Sciatic nerve (tissue), 2 donors: ENCODE measurements at regions of chr7 and their contacts with region 1.

Region 1: DNA sequence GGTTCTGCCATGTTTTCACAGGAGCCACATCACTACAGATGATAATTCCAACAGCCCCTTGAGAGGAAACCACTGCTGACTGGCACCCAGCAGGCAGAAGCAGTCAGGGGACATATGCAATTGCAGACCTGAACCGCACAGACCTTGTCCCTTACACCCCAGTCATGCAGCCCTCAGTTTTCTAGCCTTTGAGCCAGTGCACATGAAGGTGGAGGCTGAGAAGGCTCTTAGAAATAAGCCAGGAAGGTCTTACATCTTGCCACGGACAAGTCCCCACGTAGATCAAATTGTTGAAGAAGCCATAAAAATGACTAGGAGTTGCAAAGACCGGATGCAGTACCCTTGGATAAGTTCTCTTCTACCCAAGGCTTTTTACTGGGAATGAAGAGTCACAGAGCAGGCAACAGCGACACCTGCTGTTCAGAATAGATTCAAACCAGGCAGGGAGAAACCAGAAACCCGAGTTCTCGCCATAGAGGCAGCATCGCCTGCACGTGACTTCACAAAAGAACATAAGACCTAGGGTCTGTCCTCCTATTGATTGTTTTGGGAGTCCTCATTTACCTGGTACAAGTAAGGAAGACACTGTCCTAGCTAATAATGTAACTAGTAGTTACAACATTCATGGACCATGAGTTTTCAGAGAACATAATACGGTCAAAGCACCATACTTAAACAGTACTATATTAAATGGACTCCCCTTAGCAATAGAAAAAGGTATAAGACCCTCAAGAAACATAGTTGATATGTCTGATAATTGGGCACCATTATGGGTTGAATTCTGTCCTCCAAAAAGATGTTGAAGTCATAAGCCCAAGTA is 11.1 kb downstream of the STEAP1B start:
- DNase-seq: peak; percentile 82
- ATAC-seq: peak; percentile 82

Region 2: DNA sequence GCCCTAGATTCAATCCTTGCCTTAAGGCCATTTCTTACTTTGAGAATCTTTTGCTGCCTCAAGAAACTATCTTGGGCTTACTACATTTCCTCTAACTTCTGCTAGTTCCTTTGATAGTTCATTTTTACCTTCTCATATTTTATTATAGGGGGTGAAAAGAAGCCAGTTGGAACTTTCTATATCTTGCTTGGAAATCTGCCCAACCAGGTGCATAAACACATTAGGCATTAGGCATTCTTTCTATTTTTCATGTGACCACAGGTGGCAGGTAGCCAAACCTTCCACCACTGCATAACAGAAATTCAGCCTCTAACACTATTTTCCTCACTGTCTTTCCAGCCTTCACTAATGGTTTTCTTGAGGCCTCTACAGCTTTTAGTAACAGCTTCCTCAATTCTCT is 1402.2 kb before region 1 on chr7:
- intact Hi-C with region 1: no loop called
- DNase-seq: no peak
- ATAC-seq: no peak

Region 3: GRCh38 chr7:22109761-22110160 is 379.1 kb before region 1 on chr7:
- intact Hi-C with region 1: loop called (anchors 5 kb)
- DNase-seq: no peak
- ATAC-seq: peak; percentile 14

Region 4: GRCh38 chr7:22121702-22122474 is 367.0 kb before region 1 on chr7:
- intact Hi-C with region 1: no loop called
- DNase-seq: no peak
- ATAC-seq: peak; percentile 49

Region 5: DNA sequence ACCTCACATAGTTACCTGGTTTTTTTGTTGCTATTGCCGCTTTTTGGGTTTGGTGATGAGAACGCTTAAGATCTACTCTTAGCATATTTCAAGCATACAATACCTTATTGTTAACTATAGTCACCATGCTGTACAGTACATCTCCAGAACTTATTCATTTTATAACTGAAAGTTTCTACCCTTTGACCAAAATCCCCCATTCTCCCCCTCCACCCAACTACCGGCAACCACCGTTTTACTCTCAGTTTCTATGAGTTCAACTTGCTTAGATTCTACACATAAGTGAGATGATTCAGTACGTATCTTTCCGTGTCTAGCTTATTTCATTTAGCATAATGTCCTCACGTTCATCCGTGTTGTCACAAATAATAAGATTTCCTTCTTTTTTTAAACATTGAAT is 151.4 kb after region 1 on chr7:
- intact Hi-C with region 1: no loop called
- DNase-seq: no peak
- ATAC-seq: no peak